ENCODE measurements at regions of chr16 and their contacts with region 1.

Region 1: DNA sequence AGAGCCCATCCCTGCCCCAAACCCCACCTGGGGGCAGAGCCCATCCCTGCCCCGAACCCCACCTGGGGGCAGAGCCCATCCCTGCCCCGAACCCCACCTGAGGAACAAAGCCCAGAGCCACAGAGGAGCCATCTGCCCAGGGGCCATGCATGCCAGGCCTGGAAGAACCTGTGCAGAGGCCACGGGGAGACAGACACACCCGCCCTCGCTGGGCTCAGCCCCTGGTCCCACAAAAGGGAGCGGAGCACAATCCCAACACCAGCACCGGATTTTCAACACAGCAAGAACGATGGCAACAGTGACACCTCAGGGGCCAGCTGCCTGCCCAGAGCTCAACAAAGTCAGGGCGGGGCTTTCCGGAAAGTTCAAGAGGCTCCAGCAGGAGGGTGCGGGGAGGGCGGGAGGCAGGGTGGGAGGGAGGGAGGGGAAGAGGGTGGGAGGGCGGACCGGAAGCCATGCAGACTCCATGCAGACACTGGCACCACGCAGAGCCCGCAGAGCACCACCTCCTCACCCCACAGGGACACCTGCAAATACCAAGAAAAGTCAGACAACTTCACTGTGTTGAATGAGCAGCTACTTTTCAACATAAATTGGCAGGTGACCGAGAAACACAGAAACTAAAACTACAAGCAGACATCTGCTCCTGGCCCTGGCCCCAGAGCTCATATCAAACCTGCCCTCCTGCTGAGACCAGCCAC is 27.9 kb upstream of the C16orf95 start:
- DNase-seq: peak in 4 of 5 donors; percentile 39 to 56 (median 46)
- ATAC-seq: peak in 3 of 4 donors; percentile 60 to 67 (median 60)
- H3K4me3 ChIP-seq: peak overlapping the region in 3 of 12 donors; percentile 8 to 20 (median 13)
- H3K27ac ChIP-seq: peak overlapping the region in 10 of 12 donors; percentile 22 to 74 (median 64)
- H3K4me1 ChIP-seq: peaks cover 0 to 23% (median 14%) of the 10 kb centered on the region in 12 donors
- H3K27me3 ChIP-seq: no peaks in the 10 kb centered on the region
- CTCF ChIP-seq: no peak
- POLR2A ChIP-seq: no peak

Region 2: GRCh38 chr16:87316923-87317749 is 27.9 kb before region 1 on chr16 and contains the start of gene C16orf95:
- intact Hi-C with region 1: loop called in 1 of 10 experiments (anchors 1 kb)
- DNase-seq: peak; percentile 96 to 97 (median 97)
- ATAC-seq: peak; percentile 97 to 99 (median 98)
- H3K4me3 ChIP-seq: peak within 1 kb of the TSS; percentile 67 to 100 (median 85)
- H3K27ac ChIP-seq: peak within 1 kb of the TSS; percentile 79 to 97 (median 91)
- H3K4me1 ChIP-seq: peaks cover 0 to 15% (median 8%) of the 10 kb centered on the region in 12 donors
- H3K27me3 ChIP-seq: no peaks in the 10 kb centered on the region
- CTCF ChIP-seq: peak; percentile 37 to 77 (median 64)
- POLR2A ChIP-seq: peak; percentile 32 to 91
- total RNA-seq, gene C16orf95: 0.91 to 4.5 (median 3.3) TPM

Region 3: DNA sequence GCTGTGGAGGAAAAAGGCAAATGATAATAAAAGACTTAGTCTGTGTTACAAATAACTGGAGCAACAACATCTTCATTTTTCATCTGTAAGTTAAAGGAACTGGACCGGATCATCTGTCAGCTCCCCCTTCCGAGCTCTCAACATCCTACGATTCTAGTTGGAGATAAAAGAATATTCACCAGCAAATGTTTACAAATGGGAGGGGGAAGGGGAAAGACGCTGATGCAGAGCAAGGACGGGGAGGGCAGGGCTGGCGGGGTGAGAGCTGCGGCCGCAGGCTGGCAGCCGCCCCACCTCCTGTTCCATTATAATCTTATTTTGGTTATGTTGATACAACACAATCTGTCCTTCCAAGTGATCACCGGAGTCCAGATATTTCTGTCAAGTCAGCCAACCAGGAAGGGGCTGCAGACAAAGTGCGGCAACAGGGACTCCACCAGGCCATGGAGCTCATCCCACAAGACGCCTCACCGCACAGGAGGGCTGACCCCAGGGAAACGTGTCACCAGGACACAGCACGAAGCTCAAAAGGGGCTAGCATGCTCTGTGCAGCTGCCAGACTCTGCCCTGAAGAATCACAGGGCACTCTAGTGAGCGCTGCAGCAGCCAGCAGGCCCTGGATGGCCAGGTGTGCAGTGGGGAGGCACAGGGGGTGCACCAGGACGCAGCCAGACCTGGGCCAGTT is 18.8 kb after region 1 on chr16:
- intact Hi-C with region 1: loop called in 1 of 10 experiments (anchors 2 kb)
- DNase-seq: peak; percentile 51 to 66 (median 57)
- ATAC-seq: peak; percentile 84 to 90 (median 84)
- H3K4me3 ChIP-seq: peak overlapping the region in 6 of 12 donors; percentile 1 to 27 (median 19)
- H3K27ac ChIP-seq: peak overlapping the region; percentile 48 to 88 (median 76)
- H3K4me1 ChIP-seq: peaks cover 3 to 89% (median 35%) of the 10 kb centered on the region in 12 donors
- H3K27me3 ChIP-seq: peaks cover 0 to 29% (median 0%) of the 10 kb centered on the region in 9 donors
- CTCF ChIP-seq: no peak
- POLR2A ChIP-seq: no peak

Region 4: DNA sequence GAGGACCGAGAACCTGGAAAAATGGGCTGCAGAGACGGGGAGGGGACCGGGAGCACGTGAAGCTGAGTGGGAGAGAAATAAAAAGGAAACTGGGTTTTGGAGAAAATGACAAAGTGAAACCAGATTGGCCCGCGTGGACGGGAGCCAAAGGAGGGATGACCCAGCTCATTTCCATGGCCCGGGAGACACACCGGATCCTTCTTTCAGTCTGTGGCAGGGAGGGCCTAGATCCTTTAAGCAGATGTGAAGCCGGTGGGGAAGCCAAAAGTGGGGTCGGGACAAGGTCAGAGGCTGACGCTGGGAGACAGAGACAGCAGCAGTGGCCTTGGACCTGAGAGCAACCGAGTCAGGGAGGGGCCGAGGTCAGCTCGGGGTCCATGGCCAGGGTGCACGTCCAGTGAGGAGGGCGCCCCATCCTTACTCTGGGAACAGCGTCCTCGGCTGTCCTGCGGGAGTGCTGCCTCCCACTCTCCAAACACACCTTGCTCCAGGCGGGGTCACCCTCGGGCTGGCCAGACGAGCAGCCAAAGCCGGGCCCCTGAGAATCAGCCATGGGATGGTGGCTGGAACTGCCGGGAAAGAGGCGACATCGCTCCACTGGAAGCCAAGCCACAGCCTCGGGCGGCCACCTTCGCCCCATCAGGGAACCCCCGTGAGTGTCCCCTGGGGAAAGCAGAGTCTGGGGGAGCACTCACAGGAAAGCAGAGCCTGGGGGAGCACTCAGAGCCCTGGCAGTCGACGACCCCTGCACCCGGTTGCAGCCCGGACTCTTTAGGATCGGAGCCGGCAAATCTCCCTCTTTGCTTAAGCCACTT is 574.0 kb after region 1 on chr16:
- intact Hi-C with region 1: no loop called
- DNase-seq: peak; percentile 47 to 79 (median 67)
- ATAC-seq: peak; percentile 4 to 62 (median 24)
- H3K4me3 ChIP-seq: peak overlapping the region in 4 of 12 donors; percentile 2 to 26 (median 20)
- H3K27ac ChIP-seq: peak overlapping the region in 2 of 12 donors; percentile 19 to 30
- H3K4me1 ChIP-seq: peaks cover 0 to 23% (median 2%) of the 10 kb centered on the region in 12 donors
- H3K27me3 ChIP-seq: no peaks in the 10 kb centered on the region
- CTCF ChIP-seq: no peak
- POLR2A ChIP-seq: no peak

Measured in heart left ventricle (tissue), 16 donors.